GM18951 (cell line): ENCODE measurements at regions of chr10 and their contacts with region 1.

Region 1: GRCh38 chr10:28663576-28664313 is 13.6 kb upstream of the BAMBI start:
- POLR2A ChIP-seq: no peak

Region 2: GRCh38 chr10:29131952-29132820 is 468.4 kb after region 1 on chr10:
- in situ Hi-C with region 1: loop called (anchors 25 kb)
- POLR2A ChIP-seq: no peak